Activated CD4-positive, alpha-beta T cell treated with anti-CD3 and anti-CD28 coated beads for 36 hours (primary cell): ENCODE measurements at regions of chr1 and their contacts with region 1.

Region 1: GRCh38 chr1:24964811-24965570 is 34.9 kb upstream of the RUNX3 start:
- DNase-seq: peak; percentile 98
- ATAC-seq: peak; percentile 81
- H3K4me3 Mint-ChIP-seq: peak overlapping the region; percentile 94
- H3K27ac Mint-ChIP-seq: peak overlapping the region; percentile 94
- H3K4me1 Mint-ChIP-seq: peaks cover 72% of the 10 kb centered on the region
- H3K27me3 Mint-ChIP-seq: no peaks in the 10 kb centered on the region

Region 2: GRCh38 chr1:23619299-23620188 is 1345.4 kb before region 1 on chr1:
- CTCF ChIA-PET with region 1: no interaction called
- POLR2A ChIA-PET with region 1: no interaction called
- intact Hi-C with region 1: loop called in 1 of 2 experiments (anchors 5 kb)
- DNase-seq: peak; percentile 90
- ATAC-seq: peak; percentile 68
- H3K4me3 Mint-ChIP-seq: peak overlapping the region; percentile 60
- H3K27ac Mint-ChIP-seq: peak overlapping the region; percentile 79
- H3K4me1 Mint-ChIP-seq: peaks cover 89% of the 10 kb centered on the region
- H3K27me3 Mint-ChIP-seq: no peaks in the 10 kb centered on the region

Region 3: DNA sequence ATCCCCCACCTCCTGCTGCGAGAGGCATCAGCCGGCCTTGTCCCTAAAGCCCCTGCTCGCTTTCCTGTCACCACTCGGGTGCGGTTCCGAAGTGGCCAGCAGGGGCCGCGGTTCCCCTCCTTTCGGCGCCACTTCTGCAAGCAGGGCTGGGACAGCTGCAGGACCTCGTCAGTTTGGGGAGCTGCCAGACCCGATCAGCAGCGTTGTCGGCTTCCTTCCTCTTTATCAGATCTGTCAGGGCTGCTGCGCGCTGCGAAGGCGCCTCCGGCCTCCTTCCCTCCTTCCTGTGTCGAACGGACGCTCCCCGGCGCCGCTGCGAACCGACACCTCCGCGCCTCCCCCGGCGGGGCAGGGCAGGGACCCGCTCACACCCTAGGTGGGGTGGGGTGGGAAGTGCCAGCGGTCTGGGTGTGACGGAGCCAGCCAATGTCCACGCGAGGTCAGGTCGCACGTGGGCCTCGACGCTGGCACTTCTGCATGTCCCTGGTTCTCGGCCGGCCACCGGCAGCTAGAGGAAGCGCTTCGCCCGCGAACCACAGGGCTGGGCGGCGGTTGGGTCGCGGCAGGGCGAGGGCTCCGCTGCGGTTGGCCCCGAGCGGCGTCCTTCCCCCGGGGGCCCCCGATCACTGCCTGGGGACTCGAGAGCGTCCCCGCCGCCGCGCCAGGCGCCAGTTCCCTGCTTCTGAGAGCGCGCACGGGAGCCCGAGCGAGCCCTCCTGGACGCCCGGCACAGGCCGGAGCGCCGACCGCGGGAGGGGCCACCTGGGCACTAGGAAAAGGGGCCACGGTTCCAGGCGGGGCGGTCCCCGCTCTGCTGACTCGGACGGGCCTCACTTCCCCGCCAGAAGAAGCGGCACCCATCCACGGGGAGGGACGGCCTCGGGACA is 116.8 kb before region 1 on chr1:
- CTCF ChIA-PET with region 1: no interaction called
- POLR2A ChIA-PET with region 1: no interaction called
- intact Hi-C with region 1: loop called in 1 of 2 experiments (anchors 5 kb)
- DNase-seq: peak; percentile 94
- ATAC-seq: peak; percentile 95
- H3K4me3 Mint-ChIP-seq: peak overlapping the region; percentile 58
- H3K27ac Mint-ChIP-seq: no peak overlapping the region
- H3K4me1 Mint-ChIP-seq: peaks cover 8% of the 10 kb centered on the region
- H3K27me3 Mint-ChIP-seq: no peaks in the 10 kb centered on the region

Region 4: GRCh38 chr1:24861821-24862727 is 102.9 kb before region 1 on chr1:
- CTCF ChIA-PET with region 1: no interaction called
- POLR2A ChIA-PET with region 1: no interaction called
- intact Hi-C with region 1: no loop called
- DNase-seq: no peak
- ATAC-seq: no peak
- H3K4me3 Mint-ChIP-seq: no peak overlapping the region
- H3K27ac Mint-ChIP-seq: no peak overlapping the region
- H3K4me1 Mint-ChIP-seq: no peaks in the 10 kb centered on the region
- H3K27me3 Mint-ChIP-seq: peaks cover 3% of the 10 kb centered on the region

Region 5: GRCh38 chr1:24930204-24931145 is 34.5 kb before region 1 on chr1 and contains the start of gene RUNX3:
- CTCF ChIA-PET with region 1: interaction called, 12 read pairs
- POLR2A ChIA-PET with region 1: interaction called, 11 read pairs
- intact Hi-C with region 1: loop called (anchors 1 kb)
- DNase-seq: peak; percentile 96
- ATAC-seq: peak; percentile 88
- H3K4me3 Mint-ChIP-seq: peak within 1 kb of the TSS; percentile 80
- H3K27ac Mint-ChIP-seq: peak within 1 kb of the TSS; percentile 91
- H3K4me1 Mint-ChIP-seq: peaks cover 66% of the 10 kb centered on the region
- H3K27me3 Mint-ChIP-seq: no peaks in the 10 kb centered on the region
- total RNA-seq, gene RUNX3: 156 to 167 TPM

Region 6: GRCh38 chr1:25031966-25032667 is 67.1 kb after region 1 on chr1:
- CTCF ChIA-PET with region 1: interaction called, 96 read pairs
- POLR2A ChIA-PET with region 1: interaction called, 9 read pairs
- intact Hi-C with region 1: loop called (anchors 1 kb)
- DNase-seq: peak; percentile 70
- ATAC-seq: peak; percentile 25
- H3K4me3 Mint-ChIP-seq: no peak overlapping the region
- H3K27ac Mint-ChIP-seq: no peak overlapping the region
- H3K4me1 Mint-ChIP-seq: peaks cover 74% of the 10 kb centered on the region
- H3K27me3 Mint-ChIP-seq: no peaks in the 10 kb centered on the region

Region 7: DNA sequence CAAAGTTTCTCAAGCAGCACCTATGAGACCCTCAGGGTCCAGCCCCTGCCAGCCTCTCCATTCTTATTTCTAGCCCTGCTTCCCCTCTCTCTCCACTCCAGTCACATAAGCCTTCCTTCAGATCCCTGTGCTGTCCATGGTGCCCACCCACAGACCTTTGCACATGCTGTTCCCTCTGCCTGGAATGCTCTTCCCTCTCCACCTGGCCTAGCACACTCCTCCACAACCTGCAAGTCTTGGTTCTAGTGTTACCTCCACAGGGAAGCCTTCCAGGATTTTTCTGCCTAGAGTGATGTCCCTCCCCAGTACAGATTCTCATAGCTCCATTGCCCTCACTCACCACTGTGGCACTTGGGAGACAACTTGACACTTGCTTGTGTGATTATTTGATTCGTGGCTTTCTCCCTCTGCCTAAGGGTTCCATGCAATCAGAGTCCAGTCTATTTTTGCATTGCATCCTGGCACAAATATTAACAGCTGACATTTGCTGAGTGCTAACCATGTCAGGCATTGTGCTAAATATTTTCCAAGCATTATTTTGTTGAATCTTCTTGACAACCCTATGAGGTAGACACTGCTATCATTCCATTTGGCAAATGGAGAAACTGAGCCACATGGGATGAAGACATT is 140.1 kb after region 1 on chr1:
- CTCF ChIA-PET with region 1: interaction called, 5 read pairs
- POLR2A ChIA-PET with region 1: interaction called, 10 read pairs
- intact Hi-C with region 1: loop called in 1 of 2 experiments (anchors 5 kb)
- DNase-seq: no peak
- ATAC-seq: no peak
- H3K4me3 Mint-ChIP-seq: no peak overlapping the region
- H3K27ac Mint-ChIP-seq: no peak overlapping the region
- H3K4me1 Mint-ChIP-seq: peaks cover 30% of the 10 kb centered on the region
- H3K27me3 Mint-ChIP-seq: no peaks in the 10 kb centered on the region